GM10248 (cell line): ENCODE measurements at regions of chr2 and their contacts with region 1.

Region 1: DNA sequence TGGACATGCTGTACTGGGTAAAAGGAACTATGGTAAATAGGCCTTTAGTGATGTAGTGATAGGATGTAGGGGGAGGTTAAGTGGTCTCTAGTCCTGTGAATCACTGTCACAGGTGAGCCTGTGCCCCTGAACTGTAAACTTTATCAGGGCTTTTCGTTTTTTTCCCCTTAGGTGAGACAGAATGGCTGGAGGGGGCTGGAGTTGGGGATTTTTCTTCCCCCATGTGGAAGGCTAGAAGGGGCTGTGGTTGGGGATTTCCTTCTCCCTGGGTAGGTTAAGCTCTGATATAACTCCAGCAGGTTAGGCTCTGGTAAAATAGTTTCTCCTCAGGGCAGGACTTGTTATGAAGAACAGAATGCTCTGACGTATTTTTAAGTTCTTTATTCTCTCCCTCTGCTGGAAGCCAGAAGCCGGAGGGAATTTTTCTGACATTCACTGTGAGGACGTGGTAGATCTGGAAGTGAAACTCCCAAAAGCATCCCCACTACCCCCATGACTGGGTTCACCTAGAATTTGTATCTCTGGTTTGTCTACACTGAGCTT is 28.5 kb downstream of the PIKFYVE start:
- DNase-seq: no peak
- CTCF ChIP-seq: no peak

Region 2: DNA sequence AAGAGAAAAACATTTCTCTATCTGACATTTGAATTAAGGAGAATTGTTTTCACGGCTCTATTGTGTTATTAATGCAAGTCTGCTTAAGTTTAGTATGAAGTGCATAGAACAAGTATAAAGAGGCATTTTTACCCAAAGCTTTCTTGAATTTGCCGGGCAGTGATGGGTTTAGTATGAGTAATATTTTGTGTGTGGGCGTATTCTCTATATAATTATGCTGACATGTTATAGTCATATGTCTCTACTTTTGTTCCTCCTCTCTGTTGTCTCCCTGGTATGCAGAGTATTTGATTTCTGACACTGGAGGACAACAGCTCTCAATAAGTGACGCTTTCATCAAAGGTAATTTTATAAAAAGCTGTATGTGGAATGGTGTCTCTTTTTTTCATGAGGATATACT is 17.4 kb after region 1 on chr2:
- CTCF ChIA-PET with region 1: interaction called, 10 read pairs
- POLR2A ChIA-PET with region 1: interaction called, 4 read pairs
- DNase-seq: peak; percentile 51
- CTCF ChIP-seq: no peak

Region 3: GRCh38 chr2:208570851-208571764 is 276.6 kb after region 1 on chr2:
- CTCF ChIA-PET with region 1: no interaction called
- POLR2A ChIA-PET with region 1: no interaction called
- DNase-seq: no peak
- CTCF ChIP-seq: no peak